A549 (cell line): ENCODE measurements at regions of chr22 and their contacts with region 1.

Region 1: GRCh38 chr22:30890686-30891442 is 77.7 kb downstream of the MORC2 start:
- DNase-seq: peak; percentile 30 to 36
- ATAC-seq: peak; percentile 54 to 91; a peak in 4 of 6 replicates
- H3K4me3 ChIP-seq: no peak overlapping the region
- H3K27ac ChIP-seq: peak overlapping the region; percentile 44 to 75; a peak in 4 of 6 replicates
- H3K4me1 ChIP-seq: no peaks in the 10 kb centered on the region
- CTCF ChIP-seq: peak; percentile 50
- EP300 ChIP-seq: no peak
- POLR2A ChIP-seq: no peak
- RAD21 ChIP-seq: peak; percentile 44 to 50

Region 2: GRCh38 chr22:30876915-30877553 is 13.8 kb before region 1 on chr22:
- CTCF ChIA-PET with region 1: interaction called, 12 read pairs
- POLR2A ChIA-PET with region 1: no interaction called
- DNase-seq: no peak
- ATAC-seq: no peak
- H3K4me3 ChIP-seq: no peak overlapping the region
- H3K27ac ChIP-seq: no peak overlapping the region
- H3K4me1 ChIP-seq: peaks cover 8% of the 10 kb centered on the region
- CTCF ChIP-seq: no peak
- EP300 ChIP-seq: no peak
- POLR2A ChIP-seq: no peak
- RAD21 ChIP-seq: no peak

Region 3: DNA sequence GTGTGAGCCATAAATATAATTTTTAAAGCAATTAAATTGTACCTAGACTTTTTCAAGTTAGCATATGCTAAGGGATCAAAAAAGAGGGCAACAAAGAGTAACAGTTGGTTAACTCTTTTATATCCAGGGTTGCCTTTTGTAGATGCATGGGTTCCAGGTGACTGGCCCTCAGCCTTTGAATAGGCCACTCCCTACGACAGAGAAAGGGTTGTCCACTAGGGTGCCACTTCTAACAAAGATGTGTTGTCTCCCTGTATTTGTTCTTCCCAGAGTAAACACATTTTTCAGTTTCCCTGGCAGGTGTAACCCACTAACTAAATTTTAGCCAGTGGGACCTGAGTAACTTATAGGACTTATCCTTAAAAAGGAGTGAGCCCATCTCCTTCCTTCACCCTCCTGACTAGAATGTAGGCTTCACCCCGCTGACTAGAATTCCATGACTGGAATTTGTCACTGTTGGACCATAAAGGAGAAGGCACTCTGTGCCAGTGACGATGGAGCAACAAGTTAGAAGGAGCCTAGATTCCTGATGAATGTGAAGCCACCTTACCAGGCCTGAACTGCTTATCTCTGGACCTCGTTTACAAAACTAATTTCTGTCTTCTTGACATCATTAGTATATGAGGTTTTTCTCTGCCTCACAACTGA is 94.8 kb after region 1 on chr22:
- CTCF ChIA-PET with region 1: no interaction called
- POLR2A ChIA-PET with region 1: no interaction called
- DNase-seq: no peak
- ATAC-seq: no peak
- H3K4me3 ChIP-seq: no peak overlapping the region
- H3K27ac ChIP-seq: no peak overlapping the region
- H3K4me1 ChIP-seq: no peaks in the 10 kb centered on the region
- CTCF ChIP-seq: no peak
- EP300 ChIP-seq: no peak
- POLR2A ChIP-seq: no peak
- RAD21 ChIP-seq: no peak